ENCODE measurements at regions of chr16 and their contacts with region 1.

Region 1: DNA sequence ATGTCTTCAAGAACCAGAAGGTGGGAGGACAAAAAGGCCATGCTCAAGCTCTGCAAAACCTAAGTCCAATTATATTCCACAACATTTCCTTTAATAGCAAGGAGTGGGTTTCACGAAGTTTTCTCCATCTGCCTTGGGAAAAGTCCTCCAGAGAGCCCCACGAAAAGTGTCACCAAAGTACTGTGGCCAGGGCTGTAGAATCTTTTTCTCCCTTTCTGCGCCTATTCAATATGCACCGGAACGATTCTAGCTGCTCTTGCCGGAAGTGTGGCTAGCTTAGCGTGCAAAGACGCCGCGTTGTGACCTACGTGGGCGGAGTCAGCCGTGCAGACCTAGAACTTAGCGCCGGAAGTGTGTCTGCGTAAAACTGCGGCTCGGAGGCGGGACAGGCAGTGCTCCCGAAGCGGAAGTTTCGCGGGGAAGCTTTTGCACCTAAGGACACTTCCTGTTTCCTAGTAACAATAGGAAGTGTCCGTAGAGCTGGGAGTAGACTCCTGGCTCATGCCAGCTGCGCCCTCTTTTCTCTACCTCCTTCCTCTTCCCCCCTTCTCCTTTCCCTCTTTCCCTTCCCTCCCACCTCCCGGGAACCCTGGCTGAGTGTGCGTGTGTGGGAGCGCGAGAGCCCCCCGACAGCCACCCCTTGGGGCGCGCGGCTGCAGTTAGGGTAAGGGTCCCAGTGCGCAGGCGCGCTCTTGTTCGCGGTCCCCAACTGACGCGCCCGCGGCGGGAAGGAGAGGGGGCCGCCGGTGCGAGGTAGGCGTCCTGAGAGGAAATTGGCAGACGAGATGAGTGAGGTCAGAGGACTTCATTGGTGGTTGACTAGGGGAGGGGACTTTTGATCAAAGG is at the starts of genes ZNF646 and ZNF668:
- DNase-seq: peak; percentile 96 to 99 (median 98)
- ATAC-seq: peak; percentile 94
- H3K4me3 ChIP-seq: peak within 1 kb of the TSS; percentile 72 to 84
- H3K27ac ChIP-seq: peak within 1 kb of the TSS; percentile 93 to 96
- H3K4me1 ChIP-seq: peaks cover 16 to 31% of the 10 kb centered on the region in 2 donors
- H3K27me3 ChIP-seq: no peaks in the 10 kb centered on the region
- CTCF ChIP-seq: no peak
- polyA plus RNA-seq, gene ZNF646: 11.3 to 14.6 (median 12.9) TPM
- polyA plus RNA-seq, gene ZNF668: 3.8 to 5.9 (median 5.4) TPM

Region 2: GRCh38 chr16:30941600-30942425 is 132.4 kb before region 1 on chr16:
- intact Hi-C with region 1: no loop called
- DNase-seq: peak in 3 of 4 donors; percentile 70 to 94 (median 84)
- ATAC-seq: peak; percentile 98
- H3K4me3 ChIP-seq: no peak overlapping the region
- H3K27ac ChIP-seq: peak overlapping the region in 1 of 2 donors; percentile 46
- H3K4me1 ChIP-seq: peaks cover 4 to 27% of the 10 kb centered on the region in 2 donors
- H3K27me3 ChIP-seq: no peaks in the 10 kb centered on the region
- CTCF ChIP-seq: peak; percentile 83 to 93

Region 3: DNA sequence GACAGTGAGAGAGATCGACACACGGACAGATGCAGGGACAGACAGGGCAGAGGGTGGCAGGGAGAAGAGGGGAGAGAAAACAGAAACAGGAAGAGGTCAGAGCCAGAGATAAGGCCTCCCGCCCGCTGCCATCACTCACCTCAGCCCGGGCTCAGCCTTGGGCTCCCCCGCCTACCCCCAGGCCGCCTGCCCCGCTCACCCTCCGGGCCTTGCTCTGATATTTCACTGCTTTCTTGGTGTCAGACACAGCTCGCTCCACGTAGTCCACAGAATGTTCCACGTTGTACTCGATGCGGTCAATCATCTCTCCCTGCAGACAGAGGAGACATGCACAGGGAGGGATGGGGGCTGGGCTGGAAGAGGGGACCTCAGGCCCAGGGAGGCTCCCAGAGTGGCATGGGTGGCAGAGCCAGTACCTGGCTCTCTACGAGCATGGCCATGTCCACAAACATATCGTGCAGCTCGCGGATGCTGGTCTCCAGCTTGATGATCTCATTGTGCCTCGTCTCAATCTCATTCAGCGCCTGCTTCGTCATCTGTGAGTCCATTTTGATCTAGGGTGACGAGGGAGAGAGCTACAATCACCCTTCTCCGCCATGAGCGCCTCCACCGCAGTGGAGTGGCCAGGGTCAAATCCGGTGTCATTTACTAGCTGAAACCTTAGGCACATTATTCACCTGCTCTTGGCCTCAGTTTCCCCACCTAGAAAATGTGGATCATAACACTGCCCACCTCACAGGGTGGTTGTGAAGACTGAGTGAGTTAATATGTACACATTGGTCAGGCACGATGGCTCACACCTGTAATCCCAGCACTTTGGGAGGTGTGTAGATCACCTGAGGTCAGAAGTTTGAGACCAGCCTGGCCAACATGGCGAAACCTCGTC is 81.0 kb before region 1 on chr16:
- intact Hi-C with region 1: no loop called
- DNase-seq: no peak
- ATAC-seq: no peak
- H3K4me3 ChIP-seq: no peak overlapping the region
- H3K27ac ChIP-seq: no peak overlapping the region
- H3K4me1 ChIP-seq: peaks cover 7 to 24% of the 10 kb centered on the region in 2 donors
- H3K27me3 ChIP-seq: peaks cover 0 to 28% of the 10 kb centered on the region in 2 donors
- CTCF ChIP-seq: no peak

Region 4: GRCh38 chr16:31009894-31010584 is 64.2 kb before region 1 on chr16:
- intact Hi-C with region 1: loop called in 1 of 2 experiments (anchors 10 kb)
- DNase-seq: no peak
- ATAC-seq: no peak
- H3K4me3 ChIP-seq: no peak overlapping the region
- H3K27ac ChIP-seq: no peak overlapping the region
- H3K4me1 ChIP-seq: no peaks in the 10 kb centered on the region
- H3K27me3 ChIP-seq: peaks cover 38 to 92% of the 10 kb centered on the region in 2 donors
- CTCF ChIP-seq: no peak

Region 5: DNA sequence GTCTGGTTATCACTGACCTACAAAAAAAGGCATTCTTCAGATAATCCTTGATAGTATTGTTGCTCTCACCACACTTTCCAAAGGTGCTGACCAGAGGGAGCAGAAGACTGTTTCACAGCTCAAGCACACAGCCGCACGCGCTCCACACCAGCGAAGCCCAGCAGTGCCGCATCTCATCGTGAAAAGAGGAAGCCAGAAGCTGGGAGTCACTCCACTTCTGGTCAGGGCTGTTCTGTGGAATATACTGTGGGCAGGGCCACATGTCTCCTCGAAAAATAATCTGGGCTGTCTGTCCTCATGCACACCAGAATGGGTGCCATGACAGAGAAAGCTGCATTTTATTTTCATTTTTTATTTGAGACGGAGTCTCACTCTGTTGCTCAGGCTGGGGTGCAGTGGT is 82.9 kb after region 1 on chr16:
- intact Hi-C with region 1: loop called in 1 of 2 experiments (anchors 10 kb)
- DNase-seq: peak in 2 of 4 donors; percentile 53 to 84
- ATAC-seq: peak; percentile 81
- H3K4me3 ChIP-seq: no peak overlapping the region
- H3K27ac ChIP-seq: no peak overlapping the region
- H3K4me1 ChIP-seq: peaks cover 0 to 9% of the 10 kb centered on the region in 2 donors
- H3K27me3 ChIP-seq: no peaks in the 10 kb centered on the region
- CTCF ChIP-seq: no peak